GM10248 (cell line): ENCODE measurements at regions of chr15 and their contacts with region 1.

Region 1: DNA sequence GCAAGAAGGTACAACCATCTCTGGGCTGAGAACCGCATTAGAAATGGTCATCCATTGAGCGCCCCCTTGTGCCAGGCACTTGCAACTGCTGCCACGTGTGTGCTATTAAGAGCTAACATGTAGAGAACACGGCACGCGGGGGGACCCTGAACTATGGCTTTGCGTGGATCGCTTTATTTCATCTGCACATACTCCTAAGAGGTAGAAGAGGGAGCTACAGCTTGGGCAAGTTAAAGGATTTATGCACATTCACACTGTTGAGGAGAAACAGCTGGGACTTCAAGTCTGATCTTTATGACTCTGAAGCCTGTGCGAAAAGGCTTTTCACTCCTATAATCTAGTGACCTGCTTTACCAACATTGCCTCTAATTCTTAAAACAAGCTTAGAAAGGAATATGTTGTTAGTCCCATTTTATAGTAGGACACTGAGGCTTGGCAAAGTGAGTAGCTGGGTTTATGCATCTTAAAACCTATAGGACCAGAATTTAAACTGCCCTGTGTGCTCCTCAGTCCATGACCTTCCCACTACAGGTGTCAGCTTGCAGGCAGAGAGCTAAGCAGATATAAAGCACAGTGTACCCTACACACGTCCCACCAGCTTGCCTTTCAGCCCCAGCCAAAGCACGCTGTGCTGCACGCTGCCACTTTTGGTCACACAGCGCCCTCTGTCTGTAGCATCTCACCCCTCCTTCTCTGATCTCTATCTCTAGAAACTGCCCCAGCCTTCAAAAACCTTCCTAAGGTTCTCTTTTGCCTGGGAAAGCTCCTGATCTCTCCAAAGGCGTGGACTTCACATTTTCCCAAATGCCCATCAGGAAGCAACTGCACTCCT is 57.8 kb downstream of the STARD5 start:
- DNase-seq: peak; percentile 79
- CTCF ChIP-seq: peak; percentile 97

Region 2: GRCh38 chr15:80977627-80978036 is 288.5 kb before region 1 on chr15:
- CTCF ChIA-PET with region 1: interaction called, 50 read pairs
- POLR2A ChIA-PET with region 1: no interaction called
- DNase-seq: peak; percentile 32
- CTCF ChIP-seq: peak; percentile 25

Region 3: GRCh38 chr15:81106560-81106959 is 159.6 kb before region 1 on chr15:
- CTCF ChIA-PET with region 1: interaction called, 455 read pairs
- POLR2A ChIA-PET with region 1: no interaction called
- DNase-seq: peak; percentile 72
- CTCF ChIP-seq: peak; percentile 80

Region 4: GRCh38 chr15:81155375-81156218 is 110.6 kb before region 1 on chr15:
- CTCF ChIA-PET with region 1: interaction called, 215 read pairs
- POLR2A ChIA-PET with region 1: no interaction called
- DNase-seq: peak; percentile 41
- CTCF ChIP-seq: peak; percentile 60

Region 5: GRCh38 chr15:81244306-81244705 is 21.9 kb before region 1 on chr15:
- CTCF ChIA-PET with region 1: interaction called, 28 read pairs
- POLR2A ChIA-PET with region 1: no interaction called
- DNase-seq: no peak
- CTCF ChIP-seq: no peak

Region 6: DNA sequence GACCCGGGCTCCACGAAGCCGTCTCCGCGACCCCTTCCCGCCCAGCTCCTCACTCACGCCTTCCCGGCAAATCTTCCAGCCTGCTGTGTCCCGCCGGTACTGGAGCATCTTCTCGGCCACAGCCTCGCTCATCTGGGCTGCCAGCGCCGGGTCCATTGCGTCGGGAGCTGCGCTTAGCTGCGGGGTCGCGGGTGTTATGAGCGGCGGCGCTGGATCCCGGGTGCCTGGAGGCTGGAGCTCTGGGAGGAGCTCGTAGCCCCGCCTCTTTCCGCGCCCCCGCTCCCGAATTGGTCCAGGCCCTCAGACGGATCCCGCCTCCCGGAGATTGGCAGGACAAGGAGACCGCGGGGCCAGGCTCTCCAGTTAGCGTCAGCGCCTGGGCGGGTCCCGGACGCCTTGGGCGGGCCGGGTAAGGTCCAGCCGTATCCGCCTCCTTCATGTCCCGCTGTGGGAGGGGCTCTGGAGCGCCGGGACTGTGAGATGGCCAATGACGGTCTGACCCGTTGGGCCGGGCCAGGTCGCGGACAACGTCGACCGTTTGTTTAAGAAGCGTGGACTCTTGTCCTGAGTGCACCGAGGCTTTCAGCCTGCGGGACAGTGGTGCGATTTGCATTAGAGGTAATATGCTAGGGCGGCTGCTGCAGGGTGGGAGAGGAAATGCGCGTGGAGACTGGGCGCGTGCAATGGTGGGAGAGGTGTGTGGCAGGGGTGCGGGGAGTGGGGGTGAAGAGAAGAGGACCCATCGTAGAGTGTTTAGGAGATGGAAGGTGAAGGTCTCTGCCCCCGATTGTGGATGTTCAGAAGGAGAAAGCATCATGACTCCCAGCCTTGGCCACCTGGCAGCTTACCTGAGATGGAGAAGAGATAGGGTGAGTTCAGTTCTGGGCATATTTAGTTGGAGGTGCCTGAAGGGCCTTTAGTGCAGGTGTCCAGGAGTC is 58.1 kb after region 1 on chr15 and contains the start of gene STARD5:
- CTCF ChIA-PET with region 1: interaction called, 25 read pairs
- POLR2A ChIA-PET with region 1: no interaction called
- DNase-seq: peak; percentile 98
- CTCF ChIP-seq: no peak

Region 7: DNA sequence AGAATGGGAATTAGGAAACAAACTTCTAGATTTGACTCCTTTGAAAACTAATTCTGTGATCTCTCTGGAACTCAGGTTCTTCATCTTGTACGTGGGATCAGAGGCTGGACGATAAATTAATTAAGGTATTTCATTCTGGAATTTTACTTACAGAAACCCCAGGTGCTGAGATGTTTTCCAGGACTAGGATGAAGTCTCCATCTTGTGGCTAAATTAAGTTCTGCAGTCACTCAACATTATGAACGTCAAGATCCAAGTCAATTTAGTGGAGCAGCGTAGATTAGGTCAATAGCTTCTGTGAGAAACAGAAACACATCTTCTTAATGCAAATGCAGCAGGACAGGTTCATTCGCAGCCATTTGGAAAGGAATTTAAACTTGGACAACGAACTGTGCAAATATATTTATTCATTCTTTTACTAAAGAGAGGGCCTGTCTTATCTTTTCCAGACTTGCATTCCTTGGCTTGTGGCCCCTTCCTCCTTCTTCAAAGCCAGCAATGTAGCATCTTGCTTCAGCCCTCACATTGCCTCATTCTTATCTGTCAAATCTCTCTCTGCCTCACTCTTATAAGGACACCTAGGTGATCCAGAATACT is 134.6 kb after region 1 on chr15:
- CTCF ChIA-PET with region 1: interaction called, 37 read pairs
- POLR2A ChIA-PET with region 1: no interaction called
- DNase-seq: peak; percentile 40
- CTCF ChIP-seq: peak; percentile 49